PC-3 (cell line): ENCODE measurements at regions of chr4 and their contacts with region 1.

Region 1: GRCh38 chr4:85632981-85633380 is 158.0 kb downstream of the ARHGAP24 start:
- DNase-seq: no peak
- ATAC-seq: no peak
- H3K4me3 ChIP-seq: no peak overlapping the region
- H3K27ac ChIP-seq: no peak overlapping the region
- H3K4me1 ChIP-seq: no peaks in the 10 kb centered on the region
- H3K27me3 ChIP-seq: no peaks in the 10 kb centered on the region
- CTCF ChIP-seq: no peak

Region 2: GRCh38 chr4:85452058-85452731 is 180.8 kb before region 1 on chr4:
- CTCF ChIA-PET with region 1: no interaction called
- POLR2A ChIA-PET with region 1: interaction called, 16 read pairs
- intact Hi-C with region 1: no loop called
- DNase-seq: no peak
- ATAC-seq: no peak
- H3K4me3 ChIP-seq: no peak overlapping the region
- H3K27ac ChIP-seq: no peak overlapping the region
- H3K4me1 ChIP-seq: no peaks in the 10 kb centered on the region
- H3K27me3 ChIP-seq: no peaks in the 10 kb centered on the region
- CTCF ChIP-seq: no peak

Region 3: GRCh38 chr4:85489273-85490265 is 143.4 kb before region 1 on chr4:
- CTCF ChIA-PET with region 1: no interaction called
- POLR2A ChIA-PET with region 1: no interaction called
- intact Hi-C with region 1: no loop called
- DNase-seq: peak; percentile 48
- ATAC-seq: peak; percentile 92
- H3K4me3 ChIP-seq: no peak overlapping the region
- H3K27ac ChIP-seq: no peak overlapping the region
- H3K4me1 ChIP-seq: peaks cover 9% of the 10 kb centered on the region
- H3K27me3 ChIP-seq: no peaks in the 10 kb centered on the region
- CTCF ChIP-seq: no peak